ENCODE measurements at regions of chr1 and their contacts with region 1.

Region 1: GRCh38 chr1:37486680-37487618 is 12.6 kb downstream of the ZC3H12A start:
- DNase-seq: no peak
- H3K4me3 ChIP-seq: no peak overlapping the region
- CTCF ChIP-seq: peak; percentile 98

Region 2: GRCh38 chr1:37238364-37239224 is 248.4 kb before region 1 on chr1:
- CTCF ChIA-PET with region 1: no interaction called
- POLR2A ChIA-PET with region 1: no interaction called
- DNase-seq: no peak
- H3K4me3 ChIP-seq: no peak overlapping the region
- CTCF ChIP-seq: no peak

Region 3: DNA sequence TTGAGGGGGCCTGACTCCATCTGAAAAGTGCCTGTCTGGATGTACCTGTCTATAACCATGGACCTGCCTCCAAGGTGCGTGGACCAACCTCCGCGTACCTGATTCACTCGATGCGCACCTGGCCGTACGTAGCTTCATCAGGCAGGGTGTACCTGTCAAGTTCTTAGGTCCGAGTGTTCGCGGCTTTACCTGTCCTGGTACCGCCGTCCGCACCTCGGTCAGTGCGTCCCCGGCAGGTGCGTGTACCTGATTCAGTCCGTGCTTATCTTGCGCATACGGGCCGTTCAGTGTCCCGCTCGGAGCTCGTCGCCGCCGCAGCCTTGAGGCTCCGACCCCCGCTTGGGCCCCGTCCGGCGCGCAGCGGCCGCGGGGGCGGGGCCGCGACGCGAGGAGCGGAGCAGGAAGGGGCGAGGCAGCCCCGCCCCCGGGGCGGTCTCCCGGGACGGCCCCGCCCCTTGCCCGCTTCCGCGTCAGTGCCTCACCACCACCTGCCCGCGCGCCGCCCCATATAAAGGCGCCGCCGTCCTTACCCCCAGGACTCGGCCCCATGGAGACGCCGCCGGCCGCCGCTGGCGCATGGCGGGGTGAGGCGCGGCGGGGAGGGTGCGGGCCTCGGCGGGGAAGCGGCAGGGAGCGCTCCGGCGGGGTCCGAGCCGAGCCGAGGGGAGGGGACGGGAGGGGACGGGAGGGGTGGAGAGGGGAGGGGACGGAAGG is 12.7 kb before region 1 on chr1 and contains the start of gene ZC3H12A:
- CTCF ChIA-PET with region 1: interaction called, 182 read pairs
- POLR2A ChIA-PET with region 1: interaction called, 49 read pairs
- DNase-seq: no peak
- H3K4me3 ChIP-seq: peak within 1 kb of the TSS; percentile 93
- CTCF ChIP-seq: no peak

Region 4: DNA sequence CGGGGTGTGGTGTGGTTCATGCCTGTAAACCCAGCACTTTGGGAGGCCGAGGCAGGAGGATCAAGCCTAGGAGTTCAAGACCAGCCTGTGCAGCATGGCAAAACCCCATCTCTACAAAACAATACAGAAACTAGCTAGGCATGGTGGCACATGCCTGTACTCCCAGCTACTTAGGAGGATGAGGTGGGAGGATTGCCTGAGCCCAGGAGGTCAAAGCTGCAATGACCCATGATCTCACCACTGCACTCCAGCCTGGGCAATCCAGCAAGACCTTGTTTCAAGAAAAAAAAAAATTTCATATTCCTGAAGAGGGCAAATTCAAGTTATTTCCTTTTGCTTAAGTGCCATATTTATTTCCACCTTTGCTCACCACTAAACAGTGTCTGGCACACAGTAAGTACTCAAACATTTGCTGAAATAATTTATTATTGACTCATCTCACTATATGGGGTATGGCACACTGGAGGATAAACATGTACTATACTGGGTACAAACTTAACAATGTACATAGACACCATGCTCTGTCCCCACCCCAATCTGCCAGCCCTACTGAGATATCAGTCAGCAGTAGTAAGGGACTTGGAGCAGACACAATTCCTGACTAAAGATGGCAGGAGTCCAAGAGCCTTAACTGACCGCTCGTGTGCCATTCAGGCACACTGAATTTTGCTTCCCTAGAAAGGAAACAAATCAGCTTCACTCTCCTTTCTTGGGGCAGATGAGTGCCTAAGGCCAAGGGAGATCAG is 12.1 kb after region 1 on chr1:
- CTCF ChIA-PET with region 1: interaction called, 72 read pairs
- POLR2A ChIA-PET with region 1: interaction called, 4 read pairs
- DNase-seq: no peak
- H3K4me3 ChIP-seq: no peak overlapping the region
- CTCF ChIP-seq: no peak

Region 5: DNA sequence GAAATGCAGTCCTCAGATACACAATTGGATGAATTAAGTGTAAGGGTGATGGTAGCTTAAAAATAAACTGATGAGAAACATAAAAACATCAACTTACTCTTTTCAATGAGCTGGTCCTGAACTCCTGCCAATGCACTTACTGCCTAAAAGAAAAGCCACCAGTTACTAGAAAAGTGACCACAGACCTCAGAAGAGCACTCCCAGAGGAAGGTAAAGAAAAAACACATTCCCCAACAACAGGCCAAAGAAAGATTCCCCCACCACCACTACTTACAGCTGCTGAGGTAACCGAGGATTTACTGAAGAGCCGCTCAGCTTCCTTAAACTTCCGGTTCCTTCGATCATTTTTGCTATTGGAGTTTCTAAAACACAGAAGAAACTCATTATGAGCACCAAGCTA is 22.2 kb after region 1 on chr1:
- CTCF ChIA-PET with region 1: interaction called, 72 read pairs
- POLR2A ChIA-PET with region 1: no interaction called
- DNase-seq: no peak
- H3K4me3 ChIP-seq: no peak overlapping the region
- CTCF ChIP-seq: peak; percentile 6

Measured in AG04449 (cell line).